Activated naive CD4-positive, alpha-beta T cell treated with anti-CD3 and anti-CD28 coated beads for 36 hours (primary cell): ENCODE measurements at regions of chr6 and their contacts with region 1.

Region 1: GRCh38 chr6:151723152-151723551 is 84.3 kb upstream of the ESR1 start:
- DNase-seq: peak; percentile 76
- H3K4me3 Mint-ChIP-seq: no peak overlapping the region
- H3K27ac Mint-ChIP-seq: no peak overlapping the region
- H3K4me1 Mint-ChIP-seq: peaks cover 29% of the 10 kb centered on the region
- H3K27me3 Mint-ChIP-seq: peaks cover 3% of the 10 kb centered on the region

Region 2: GRCh38 chr6:151379933-151380847 is 343.0 kb before region 1 on chr6:
- CTCF ChIA-PET with region 1: no interaction called
- intact Hi-C with region 1: no loop called
- DNase-seq: peak; percentile 33
- H3K4me3 Mint-ChIP-seq: peak overlapping the region; percentile 86
- H3K27ac Mint-ChIP-seq: peak overlapping the region; percentile 98
- H3K4me1 Mint-ChIP-seq: peaks cover 61% of the 10 kb centered on the region
- H3K27me3 Mint-ChIP-seq: no peaks in the 10 kb centered on the region

Region 3: DNA sequence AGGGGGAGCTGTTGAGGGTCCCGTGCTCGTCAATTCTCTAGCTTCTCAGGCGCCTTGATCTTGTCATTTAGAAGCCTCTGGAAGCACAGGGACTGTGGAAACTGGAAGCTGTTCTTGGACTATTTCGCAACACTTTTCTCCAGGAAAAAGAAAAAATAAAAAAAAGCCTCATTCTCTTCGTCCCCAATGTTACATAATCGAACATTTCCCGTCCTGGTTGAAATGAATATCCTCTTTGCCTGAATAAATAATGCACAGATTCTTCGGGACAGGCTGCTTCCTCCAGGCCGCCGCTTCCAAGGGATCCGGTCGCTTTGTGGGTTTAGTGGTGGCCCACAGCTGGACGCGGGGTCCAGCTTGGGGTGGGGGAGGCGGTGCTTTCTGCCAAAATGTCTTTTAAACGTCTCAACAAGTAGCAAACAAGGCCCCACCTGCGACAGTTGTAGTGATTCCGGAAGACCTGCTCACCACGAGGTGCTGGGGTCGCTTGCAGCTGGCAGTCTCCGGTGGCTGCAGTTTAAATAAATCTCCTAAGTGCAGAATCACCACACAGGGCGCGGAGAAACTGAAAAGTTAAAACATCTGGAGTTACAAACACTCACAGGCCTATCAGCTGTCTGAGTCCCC is 41.6 kb before region 1 on chr6:
- CTCF ChIA-PET with region 1: no interaction called
- intact Hi-C with region 1: no loop called
- DNase-seq: no peak
- H3K4me3 Mint-ChIP-seq: peak overlapping the region; percentile 5
- H3K27ac Mint-ChIP-seq: no peak overlapping the region
- H3K4me1 Mint-ChIP-seq: peaks cover 10% of the 10 kb centered on the region
- H3K27me3 Mint-ChIP-seq: peaks cover 12% of the 10 kb centered on the region

Region 4: DNA sequence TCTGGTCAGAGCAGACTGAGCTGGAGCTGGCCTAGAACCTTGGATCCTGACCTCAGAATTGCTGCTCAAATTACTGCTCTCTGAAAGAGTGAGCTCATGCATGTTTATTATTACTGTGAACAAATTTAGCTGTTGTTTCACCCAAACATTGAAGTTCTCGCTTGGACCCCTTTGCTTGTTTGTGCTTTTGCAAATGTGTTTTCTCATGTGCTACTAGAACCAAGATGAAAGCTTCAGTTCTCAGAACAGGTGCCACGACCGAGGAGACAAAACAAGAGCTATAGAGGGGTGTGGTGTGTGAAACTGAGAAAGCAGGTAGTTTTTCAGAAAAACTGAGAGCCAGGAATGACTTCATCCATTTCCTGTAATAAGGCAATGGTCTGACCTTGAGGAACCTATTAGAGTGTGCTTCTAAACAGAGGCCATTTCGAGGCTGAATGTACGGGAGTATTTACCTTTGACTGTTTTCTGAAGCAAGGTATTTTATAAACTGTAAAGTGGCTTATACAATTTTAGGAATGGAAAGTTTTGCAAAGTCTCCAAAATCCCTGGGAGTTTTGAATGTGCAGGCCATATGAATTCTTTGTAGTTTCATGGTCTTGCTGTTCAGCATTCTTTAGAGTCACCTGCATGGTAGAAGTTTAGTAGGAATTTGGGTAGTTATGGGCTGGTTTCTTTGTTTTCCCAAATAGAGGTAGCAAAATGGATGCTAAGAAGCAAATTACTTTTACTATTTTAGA is 34.5 kb after region 1 on chr6:
- CTCF ChIA-PET with region 1: no interaction called
- intact Hi-C with region 1: loop called (anchors 1 kb)
- DNase-seq: peak; percentile 67
- H3K4me3 Mint-ChIP-seq: peak overlapping the region; percentile 36
- H3K27ac Mint-ChIP-seq: peak overlapping the region; percentile 80
- H3K4me1 Mint-ChIP-seq: peaks cover 37% of the 10 kb centered on the region
- H3K27me3 Mint-ChIP-seq: no peaks in the 10 kb centered on the region

Region 5: DNA sequence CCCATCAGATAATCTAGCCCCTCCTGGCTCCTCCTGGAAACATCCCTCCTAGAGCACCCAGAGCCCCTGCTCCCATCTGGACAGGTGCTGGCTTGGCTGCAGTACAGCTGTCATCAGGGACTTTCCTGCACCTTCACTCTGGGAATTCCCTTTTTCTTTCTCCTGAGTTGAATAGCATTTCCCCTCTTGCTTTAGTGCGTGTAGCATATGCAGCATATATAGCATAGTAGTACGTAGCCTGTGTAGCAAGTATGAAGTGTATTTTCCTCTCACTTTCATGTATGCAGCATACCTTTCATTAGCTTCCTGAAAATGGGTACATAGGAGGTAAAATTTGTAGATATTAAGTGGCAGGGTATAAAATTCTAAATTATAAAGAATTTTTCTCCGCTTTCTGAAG is 437.2 kb after region 1 on chr6:
- CTCF ChIA-PET with region 1: no interaction called
- intact Hi-C with region 1: loop called (anchors 1 kb)
- DNase-seq: peak; percentile 64
- H3K4me3 Mint-ChIP-seq: no peak overlapping the region
- H3K27ac Mint-ChIP-seq: peak overlapping the region; percentile 85
- H3K4me1 Mint-ChIP-seq: peaks cover 28% of the 10 kb centered on the region
- H3K27me3 Mint-ChIP-seq: no peaks in the 10 kb centered on the region